ENCODE measurements at regions of chr6 and their contacts with region 1.

Region 1: GRCh38 chr6:41895300-41896233 is at the start of gene USP49:
- DNase-seq: peak; percentile 97 to 98 (median 98)
- ATAC-seq: peak; percentile 96
- H3K4me3 ChIP-seq: peak within 1 kb of the TSS; percentile 56
- H3K27ac ChIP-seq: peak within 1 kb of the TSS; percentile 79
- H3K4me1 ChIP-seq: peaks cover 8 to 11% of the 10 kb centered on the region in 2 experiments
- H3K27me3 ChIP-seq: no peaks in the 10 kb centered on the region
- CTCF ChIP-seq: peak in 1 of 3 experiments; percentile 1; a peak in 1 of 6 replicates
- EP300 ChIP-seq: no peak
- POLR2A ChIP-seq: peak; percentile 85
- RAD21 ChIP-seq: no peak
- polyA plus RNA-seq, gene USP49: 1.0 to 1.6 TPM

Region 2: DNA sequence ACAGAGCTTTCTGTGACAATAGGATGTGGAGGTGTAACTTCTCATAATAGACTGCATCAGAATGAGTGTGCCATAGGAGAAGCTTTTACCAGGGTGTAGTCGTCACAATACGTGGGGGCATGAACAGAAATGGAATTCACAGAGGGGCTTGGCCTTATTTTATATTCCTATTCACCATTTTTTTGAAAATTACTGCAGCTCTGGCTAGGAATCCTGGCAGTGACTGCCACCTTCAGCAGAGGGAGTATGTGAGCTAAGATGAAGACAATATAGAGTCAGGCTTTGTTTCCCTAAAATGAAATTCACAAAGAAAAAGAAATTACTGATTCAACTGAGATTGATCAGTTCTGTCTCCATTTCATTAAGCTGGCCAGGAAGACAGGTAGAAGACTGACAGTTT is 94.2 kb before region 1 on chr6:
- CTCF ChIA-PET with region 1: no interaction called
- POLR2A ChIA-PET with region 1: no interaction called
- in situ Hi-C with region 1: no loop called
- intact Hi-C with region 1: loop called (anchors 5 kb)
- DNase-seq: peak in 1 of 4 experiments; percentile 33
- ATAC-seq: peak; percentile 71
- H3K4me3 ChIP-seq: no peak overlapping the region
- H3K27ac ChIP-seq: no peak overlapping the region
- H3K4me1 ChIP-seq: peaks cover 0 to 3% of the 10 kb centered on the region in 2 experiments; a peak in 1 of 5 replicates
- H3K27me3 ChIP-seq: no peaks in the 10 kb centered on the region
- CTCF ChIP-seq: peak; percentile 54 to 71 (median 63); a peak in 5 of 6 replicates
- EP300 ChIP-seq: no peak
- POLR2A ChIP-seq: no peak
- RAD21 ChIP-seq: peak; percentile 70 to 78

Measured in K562 (cell line).